ENCODE measurements at regions of chr3 and their contacts with region 1.

Region 1: GRCh38 chr3:196198771-196199753 is 12.1 kb downstream of the ZDHHC19 start:
- DNase-seq: no peak
- H3K4me3 ChIP-seq: no peak overlapping the region
- H3K27ac ChIP-seq: no peak overlapping the region
- H3K4me1 ChIP-seq: peaks cover 0 to 11% of the 10 kb centered on the region in 2 donors
- H3K27me3 ChIP-seq: no peaks in the 10 kb centered on the region
- CTCF ChIP-seq: no peak
- POLR2A ChIP-seq: no peak

Region 2: GRCh38 chr3:196023947-196024346 is 175.1 kb before region 1 on chr3:
- intact Hi-C with region 1: loop called in 1 of 2 experiments (anchors 2 kb)
- DNase-seq: no peak
- H3K4me3 ChIP-seq: no peak overlapping the region
- H3K27ac ChIP-seq: no peak overlapping the region
- H3K4me1 ChIP-seq: no peaks in the 10 kb centered on the region
- H3K27me3 ChIP-seq: no peaks in the 10 kb centered on the region
- CTCF ChIP-seq: no peak
- POLR2A ChIP-seq: no peak

Region 3: DNA sequence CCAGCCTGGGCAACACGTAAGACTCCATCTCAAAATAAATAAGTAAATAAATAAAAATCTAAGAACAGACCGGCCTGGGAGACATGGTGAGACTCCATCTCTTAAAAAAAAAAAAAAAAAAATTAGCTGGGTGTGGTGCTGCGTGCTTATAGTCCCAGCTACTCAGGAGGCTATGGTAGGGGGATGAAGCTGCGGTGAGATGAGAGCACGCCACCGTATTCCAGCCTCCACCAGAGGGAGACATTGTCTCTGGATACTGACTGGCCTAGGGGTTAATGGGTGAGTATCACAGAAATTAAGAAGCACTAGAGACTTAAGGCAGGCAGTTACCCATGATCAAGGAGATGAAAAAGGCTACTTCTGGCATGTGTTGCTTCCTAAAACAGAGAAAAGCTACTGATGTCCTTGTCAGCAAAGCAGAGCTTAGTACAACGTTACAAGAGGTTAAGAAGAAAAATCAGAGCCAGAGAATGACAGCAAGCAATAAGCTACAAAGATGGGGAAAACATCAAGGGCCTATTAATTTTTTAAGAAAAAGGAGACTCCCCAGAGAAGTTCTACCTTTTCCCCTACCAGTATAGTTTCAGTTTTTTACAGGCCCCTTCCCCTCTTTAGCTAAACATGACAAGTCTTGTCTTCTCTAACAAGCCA is 125.7 kb before region 1 on chr3:
- intact Hi-C with region 1: loop called (anchors 5 kb)
- DNase-seq: peak; percentile 53 to 79 (median 65)
- H3K4me3 ChIP-seq: no peak overlapping the region
- H3K27ac ChIP-seq: no peak overlapping the region
- H3K4me1 ChIP-seq: no peaks in the 10 kb centered on the region
- H3K27me3 ChIP-seq: no peaks in the 10 kb centered on the region
- CTCF ChIP-seq: peak; percentile 68 to 90 (median 80)
- POLR2A ChIP-seq: no peak

Region 4: GRCh38 chr3:196216089-196216564 is 17.1 kb after region 1 on chr3 and contains the start of gene SLC51A:
- intact Hi-C with region 1: no loop called
- DNase-seq: no peak
- H3K4me3 ChIP-seq: no peak within 1 kb of the TSS
- H3K27ac ChIP-seq: peak within 1 kb of the TSS in 3 of 5 donors; percentile 46 to 85 (median 84)
- H3K4me1 ChIP-seq: peaks cover 20 to 45% of the 10 kb centered on the region in 2 donors
- H3K27me3 ChIP-seq: no peaks in the 10 kb centered on the region
- CTCF ChIP-seq: no peak
- POLR2A ChIP-seq: no peak
- total RNA-seq, gene SLC51A: 1.2 to 73.1 (median 10.8) TPM

Region 5: DNA sequence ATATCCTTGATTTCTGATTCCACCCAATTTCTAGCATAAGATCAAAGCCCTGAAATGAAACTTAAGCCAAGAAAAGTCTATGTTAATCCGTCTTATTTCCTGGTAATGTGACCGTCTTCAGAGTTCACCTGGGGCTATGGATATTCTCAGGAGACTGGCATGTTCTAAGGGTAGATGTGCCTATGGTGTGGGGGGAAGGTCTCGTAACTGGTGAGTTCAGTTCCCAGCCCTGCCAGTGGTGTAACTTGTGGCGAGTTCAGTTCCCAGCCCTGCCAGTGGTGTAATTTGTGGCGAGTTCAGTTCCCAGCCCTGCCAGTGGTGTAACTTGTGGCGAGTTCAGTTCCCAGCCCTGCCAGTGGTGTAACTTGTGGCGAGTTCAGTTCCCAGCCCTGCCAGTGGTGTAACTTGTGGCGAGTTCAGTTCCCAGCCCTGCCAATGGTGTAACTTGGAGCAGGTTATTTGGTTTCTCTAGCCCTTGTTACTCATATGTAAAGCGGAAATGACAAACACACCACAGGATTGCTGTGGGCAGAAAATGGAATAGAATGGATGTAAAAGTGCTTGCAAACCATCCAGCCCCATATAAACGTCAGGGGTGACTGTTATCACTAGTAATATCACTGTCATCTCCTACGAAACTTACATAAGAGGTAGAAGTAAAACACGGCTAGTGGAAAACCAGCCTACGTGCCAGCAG is 47.7 kb after region 1 on chr3:
- intact Hi-C with region 1: no loop called
- DNase-seq: no peak
- H3K4me3 ChIP-seq: no peak overlapping the region
- H3K27ac ChIP-seq: no peak overlapping the region
- H3K4me1 ChIP-seq: no peaks in the 10 kb centered on the region
- H3K27me3 ChIP-seq: no peaks in the 10 kb centered on the region
- CTCF ChIP-seq: no peak
- POLR2A ChIP-seq: no peak